Natural killer cell (primary cell): ENCODE measurements at regions of chr1 and their contacts with region 1.

Region 1: GRCh38 chr1:203326830-203327683 is 21.7 kb downstream of the BTG2 start:
- DNase-seq: peak; percentile 96 to 97
- ATAC-seq: peak; percentile 74 to 91 (median 80)
- H3K4me3 ChIP-seq: peak overlapping the region; percentile 37
- H3K4me3 Mint-ChIP-seq: peak overlapping the region; percentile 82
- H3K27ac ChIP-seq: peak overlapping the region; percentile 95
- H3K27ac Mint-ChIP-seq: peak overlapping the region; percentile 94 to 99
- H3K4me1 ChIP-seq: peaks cover 64% of the 10 kb centered on the region
- H3K4me1 Mint-ChIP-seq: peaks cover 64 to 67% of the 10 kb centered on the region in 2 donors
- H3K27me3 ChIP-seq: no peaks in the 10 kb centered on the region
- H3K27me3 Mint-ChIP-seq: no peaks in the 10 kb centered on the region
- CTCF ChIP-seq: no peak

Region 2: DNA sequence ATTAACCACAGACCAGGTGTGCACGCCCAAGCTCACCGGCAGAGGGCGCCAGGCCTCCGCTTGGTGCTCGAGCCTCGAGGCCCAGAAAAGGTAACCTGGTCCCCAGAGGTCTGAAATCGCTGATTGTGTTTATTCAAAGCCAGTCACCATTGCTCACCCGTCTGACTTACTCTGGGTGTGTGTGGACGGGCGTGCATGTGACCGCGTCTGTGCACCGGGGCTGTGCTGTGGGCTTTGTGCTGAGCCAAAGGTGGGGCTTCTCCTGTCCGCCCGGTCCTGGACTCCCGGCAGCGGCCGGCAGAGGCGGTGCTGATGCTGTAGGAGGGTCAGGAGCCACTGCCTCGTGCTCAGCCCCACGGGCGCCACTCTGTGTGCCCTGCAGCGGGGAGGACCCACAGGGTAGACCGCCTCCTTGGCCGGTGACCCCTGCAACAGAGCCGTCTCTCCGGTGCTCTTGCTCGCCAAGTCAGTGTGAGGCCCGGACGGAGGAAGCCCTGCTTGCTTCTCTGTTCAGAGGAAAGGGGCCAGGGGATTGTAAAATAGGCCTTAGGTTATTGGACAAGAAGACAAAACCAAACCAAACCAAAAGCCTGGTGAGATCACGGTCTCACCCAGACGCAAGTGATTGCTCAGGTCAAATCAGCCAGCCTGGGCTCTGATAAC is 53.7 kb before region 1 on chr1:
- intact Hi-C with region 1: loop called (anchors 1 kb)
- DNase-seq: peak; percentile 88 to 95
- ATAC-seq: peak; percentile 82 to 90 (median 84)
- H3K4me3 ChIP-seq: peak overlapping the region; percentile 32
- H3K4me3 Mint-ChIP-seq: peak overlapping the region; percentile 52
- H3K27ac ChIP-seq: peak overlapping the region; percentile 39
- H3K27ac Mint-ChIP-seq: peak overlapping the region; percentile 60 to 80
- H3K4me1 ChIP-seq: peaks cover 50% of the 10 kb centered on the region
- H3K4me1 Mint-ChIP-seq: peaks cover 7 to 23% of the 10 kb centered on the region in 2 donors
- H3K27me3 ChIP-seq: no peaks in the 10 kb centered on the region
- H3K27me3 Mint-ChIP-seq: no peaks in the 10 kb centered on the region
- CTCF ChIP-seq: peak; percentile 96

Region 3: DNA sequence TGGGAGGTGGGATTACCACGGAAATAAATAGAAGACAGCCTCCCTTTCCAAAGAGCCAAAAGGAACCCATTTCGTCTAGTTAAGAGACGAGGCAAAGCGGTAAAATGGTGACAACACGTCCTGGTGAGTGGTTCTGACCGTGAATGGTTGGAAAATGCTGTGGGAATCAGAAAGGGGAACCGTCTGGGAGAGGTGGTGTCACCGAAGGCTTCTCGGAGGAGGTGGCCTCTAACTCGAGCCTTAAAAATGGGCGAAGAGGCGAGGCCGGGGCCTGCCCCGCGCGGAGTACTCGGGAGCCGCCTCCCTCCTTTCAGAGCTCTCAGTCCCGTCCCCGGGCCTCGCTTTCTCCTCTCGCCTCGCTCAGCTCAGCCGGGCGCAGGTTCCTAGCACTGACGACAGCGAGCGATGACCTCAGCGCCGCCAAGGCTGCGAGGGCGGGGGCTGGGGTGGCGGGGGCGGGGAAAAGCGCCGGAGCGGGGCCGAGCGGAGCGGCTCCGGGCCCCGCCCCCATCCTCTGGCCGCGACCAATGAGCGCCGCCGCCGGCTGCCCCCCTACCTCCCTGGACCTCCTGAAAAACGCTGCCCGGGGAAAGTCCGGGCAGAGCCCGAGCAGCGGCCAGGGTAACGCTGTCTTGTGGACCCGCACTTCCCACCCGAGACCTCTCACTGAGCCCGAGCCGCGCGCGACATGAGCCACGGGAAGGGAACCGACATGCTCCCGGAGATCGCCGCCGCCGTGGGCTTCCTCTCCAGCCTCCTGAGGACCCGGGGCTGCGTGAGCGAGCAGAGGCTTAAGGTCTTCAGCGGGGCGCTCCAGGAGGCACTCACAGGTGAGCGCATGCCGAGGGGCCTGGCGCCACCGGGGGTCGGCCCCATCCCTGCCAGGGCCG is 21.9 kb before region 1 on chr1 and contains the start of gene BTG2:
- intact Hi-C with region 1: loop called (anchors 1 kb)
- DNase-seq: peak; percentile 95 to 97
- ATAC-seq: peak; percentile 77 to 92 (median 82)
- H3K4me3 ChIP-seq: peak within 1 kb of the TSS; percentile 99
- H3K4me3 Mint-ChIP-seq: peak within 1 kb of the TSS; percentile 89
- H3K27ac ChIP-seq: peak within 1 kb of the TSS; percentile 97
- H3K27ac Mint-ChIP-seq: peak within 1 kb of the TSS; percentile 98 to 99
- H3K4me1 ChIP-seq: peaks cover 78% of the 10 kb centered on the region
- H3K4me1 Mint-ChIP-seq: peaks cover 75 to 77% of the 10 kb centered on the region in 2 donors
- H3K27me3 ChIP-seq: no peaks in the 10 kb centered on the region
- H3K27me3 Mint-ChIP-seq: no peaks in the 10 kb centered on the region
- CTCF ChIP-seq: no peak
- total RNA-seq, gene BTG2: 499 to 1,024 (median 851) TPM